OCI-LY7 (cell line): ENCODE measurements at regions of chr3 and their contacts with region 1.

Region 1: GRCh38 chr3:108461661-108462111 is 48.7 kb downstream of the MYH15 start:
- DNase-seq: no peak
- H3K4me3 ChIP-seq: no peak overlapping the region
- H3K27ac ChIP-seq: no peak overlapping the region
- H3K4me1 ChIP-seq: no peaks in the 10 kb centered on the region
- CTCF ChIP-seq: no peak

Region 2: DNA sequence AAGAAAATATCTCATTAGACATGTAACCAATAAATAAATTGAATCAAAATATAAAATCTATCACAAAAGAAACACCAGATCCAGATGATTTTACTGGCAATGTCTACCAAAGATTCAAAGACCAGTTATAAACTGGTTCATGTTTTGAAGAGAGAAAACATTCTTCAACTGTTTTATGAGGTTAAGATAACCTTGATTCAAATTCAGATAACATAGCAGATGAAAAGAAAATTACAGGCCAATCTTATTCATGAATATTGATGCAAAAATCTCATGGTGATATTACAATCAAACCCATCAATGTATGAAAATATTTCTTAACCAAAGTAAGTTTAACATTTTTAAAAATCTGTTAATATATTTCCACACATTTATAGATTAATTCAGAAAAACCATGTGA is 10.2 kb before region 1 on chr3:
- CTCF ChIA-PET with region 1: no interaction called
- POLR2A ChIA-PET with region 1: interaction called, 3 read pairs
- intact Hi-C with region 1: loop called (anchors 1 kb)
- DNase-seq: no peak
- H3K4me3 ChIP-seq: no peak overlapping the region
- H3K27ac ChIP-seq: no peak overlapping the region
- H3K4me1 ChIP-seq: no peaks in the 10 kb centered on the region
- CTCF ChIP-seq: no peak

Region 3: DNA sequence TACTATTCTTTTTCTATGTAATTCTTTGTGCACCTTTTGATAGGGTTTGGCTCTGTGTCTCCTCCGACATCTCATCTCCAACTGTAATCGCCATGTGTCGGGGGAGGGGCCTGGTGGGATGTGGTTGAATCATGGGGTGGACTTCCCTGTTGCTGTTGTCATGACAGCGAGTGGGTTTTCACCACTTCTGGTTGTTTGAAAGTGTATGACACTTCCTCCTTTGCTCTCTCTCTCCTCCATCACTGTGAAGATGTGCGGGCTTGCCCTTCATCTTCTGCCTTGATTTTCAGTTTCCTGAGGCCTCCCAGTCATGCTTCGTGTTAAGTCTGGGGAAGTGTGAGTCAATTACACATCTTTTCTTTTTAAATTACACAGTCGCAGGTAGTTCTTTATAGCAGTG is 1101.5 kb after region 1 on chr3:
- CTCF ChIA-PET with region 1: no interaction called
- POLR2A ChIA-PET with region 1: no interaction called
- intact Hi-C with region 1: no loop called
- DNase-seq: no peak
- H3K4me3 ChIP-seq: no peak overlapping the region
- H3K27ac ChIP-seq: no peak overlapping the region
- H3K4me1 ChIP-seq: no peaks in the 10 kb centered on the region
- CTCF ChIP-seq: no peak